Ascending aorta (tissue), 2 donors: ENCODE measurements at regions of chr1 and their contacts with region 1.

Region 1: DNA sequence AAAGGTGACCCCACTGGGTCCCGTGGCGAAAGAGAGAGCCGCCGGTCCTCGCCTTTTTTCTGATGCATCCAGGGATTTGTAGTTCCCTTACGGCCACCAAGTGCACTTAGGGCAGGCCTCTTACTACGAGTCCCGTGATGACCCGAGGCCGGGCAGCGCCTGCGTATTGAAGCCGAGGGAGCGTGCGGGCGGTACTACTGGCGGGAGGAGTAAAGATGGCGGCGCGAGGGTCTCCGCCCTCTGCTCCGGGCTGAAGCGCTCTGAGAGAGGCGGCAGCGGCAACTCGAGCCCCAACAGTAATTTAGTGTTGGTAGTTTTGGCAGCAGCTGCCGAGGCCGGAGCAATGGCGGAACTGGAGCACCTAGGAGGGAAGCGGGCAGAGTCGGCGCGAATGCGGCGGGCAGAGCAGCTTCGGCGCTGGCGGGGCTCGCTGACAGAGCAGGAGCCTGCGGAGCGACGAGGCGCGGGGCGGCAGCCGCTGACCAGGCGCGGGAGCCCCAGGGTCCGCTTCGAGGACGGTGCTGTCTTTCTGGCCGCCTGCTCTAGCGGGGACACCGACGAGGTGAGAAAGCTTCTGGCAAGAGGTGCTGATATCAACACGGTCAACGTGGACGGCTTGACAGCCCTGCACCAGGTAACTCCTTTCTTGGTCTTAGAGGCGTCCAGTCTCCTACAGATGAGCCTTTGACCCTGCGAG is at the start of gene PPP1R12B:
- DNase-seq: peak; percentile 94 to 99
- H3K4me3 ChIP-seq: peak within 1 kb of the TSS; percentile 90 to 99
- H3K27ac ChIP-seq: peak within 1 kb of the TSS; percentile 82 to 87
- H3K4me1 ChIP-seq: peaks cover 0 to 4% of the 10 kb centered on the region in 2 donors
- H3K27me3 ChIP-seq: no peaks in the 10 kb centered on the region
- CTCF ChIP-seq: no peak
- total RNA-seq, gene PPP1R12B: 404 TPM

Region 2: GRCh38 chr1:202315576-202316168 is 33.0 kb before region 1 on chr1:
- intact Hi-C with region 1: no loop called
- DNase-seq: peak in 1 of 2 donors; percentile 83
- H3K4me3 ChIP-seq: no peak overlapping the region
- H3K27ac ChIP-seq: no peak overlapping the region
- H3K4me1 ChIP-seq: peaks cover 0 to 9% of the 10 kb centered on the region in 2 donors
- H3K27me3 ChIP-seq: no peaks in the 10 kb centered on the region
- CTCF ChIP-seq: peak; percentile 73 to 89 (median 88)

Region 3: DNA sequence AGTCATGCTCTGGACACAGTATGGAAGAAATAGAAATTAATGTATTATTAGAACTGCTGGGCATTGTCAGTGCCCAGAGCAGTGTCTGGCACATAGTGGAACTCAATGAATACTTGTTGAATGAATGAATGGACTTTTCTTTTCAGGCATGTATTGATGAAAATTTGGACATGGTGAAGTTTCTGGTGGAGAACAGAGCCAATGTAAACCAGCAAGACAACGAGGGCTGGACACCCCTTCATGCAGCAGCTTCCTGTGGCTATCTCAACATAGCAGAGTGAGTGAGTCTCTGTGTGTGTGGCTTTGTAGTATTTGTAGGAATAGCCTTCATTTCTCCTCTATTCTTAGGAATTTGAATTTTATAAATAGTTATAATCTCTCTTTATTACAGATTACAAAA is 68.0 kb after region 1 on chr1:
- intact Hi-C with region 1: loop called (anchors 5 kb)
- DNase-seq: no peak
- H3K4me3 ChIP-seq: no peak overlapping the region
- H3K27ac ChIP-seq: no peak overlapping the region
- H3K4me1 ChIP-seq: peaks cover 0 to 3% of the 10 kb centered on the region in 2 donors
- H3K27me3 ChIP-seq: no peaks in the 10 kb centered on the region
- CTCF ChIP-seq: no peak

Region 4: DNA sequence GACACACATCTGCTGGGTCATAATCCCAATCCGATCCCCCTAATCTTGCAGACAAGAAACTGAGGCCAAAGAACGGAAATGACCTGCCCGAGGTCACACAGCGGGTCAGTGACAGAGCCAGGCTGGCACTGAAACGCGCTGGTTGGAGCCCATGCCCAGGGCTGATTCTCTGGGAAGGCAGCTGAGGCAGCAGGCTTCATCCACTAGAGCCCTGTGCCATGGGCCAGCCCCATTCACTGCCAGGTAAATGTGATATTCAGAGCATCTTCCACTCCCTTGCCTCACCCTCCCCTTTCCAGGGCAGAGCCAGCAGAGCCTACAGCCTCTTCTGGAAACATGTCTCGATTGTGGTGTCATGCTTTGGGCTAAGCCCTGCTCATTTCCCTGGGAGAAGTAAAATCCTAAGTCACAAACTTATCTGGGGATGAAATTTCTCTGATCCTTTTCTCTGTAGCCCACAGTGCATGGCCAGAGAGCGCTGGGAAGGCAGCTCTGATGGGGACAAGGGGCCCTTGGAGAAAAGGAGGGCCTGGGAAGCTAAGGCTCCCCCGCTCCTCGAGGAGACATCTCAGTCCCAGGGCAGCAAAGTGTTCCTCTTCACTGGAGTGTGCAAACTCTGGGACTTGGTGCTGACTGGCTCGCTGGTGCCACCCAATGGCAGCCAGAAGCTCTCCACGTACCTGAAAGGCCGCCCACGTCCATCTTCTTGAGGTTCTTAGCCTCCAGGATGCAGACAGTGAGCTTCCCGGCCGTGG is 251.2 kb after region 1 on chr1:
- intact Hi-C with region 1: loop called (anchors 10 kb)
- DNase-seq: peak in 1 of 2 donors; percentile 82
- H3K4me3 ChIP-seq: no peak overlapping the region
- H3K27ac ChIP-seq: peak overlapping the region; percentile 45 to 69
- H3K4me1 ChIP-seq: peaks cover 0 to 5% of the 10 kb centered on the region in 2 donors
- H3K27me3 ChIP-seq: no peaks in the 10 kb centered on the region
- CTCF ChIP-seq: peak; percentile 70 to 84 (median 83)